A673 (cell line): ENCODE measurements at regions of chr2 and their contacts with region 1.

Region 1: GRCh38 chr2:735670-736582 is 58.7 kb upstream of the TMEM18 start:
- DNase-seq: no peak
- H3K4me3 ChIP-seq: no peak overlapping the region
- H3K27ac ChIP-seq: no peak overlapping the region
- H3K4me1 ChIP-seq: no peaks in the 10 kb centered on the region
- H3K27me3 ChIP-seq: no peaks in the 10 kb centered on the region
- CTCF ChIP-seq: no peak

Region 2: DNA sequence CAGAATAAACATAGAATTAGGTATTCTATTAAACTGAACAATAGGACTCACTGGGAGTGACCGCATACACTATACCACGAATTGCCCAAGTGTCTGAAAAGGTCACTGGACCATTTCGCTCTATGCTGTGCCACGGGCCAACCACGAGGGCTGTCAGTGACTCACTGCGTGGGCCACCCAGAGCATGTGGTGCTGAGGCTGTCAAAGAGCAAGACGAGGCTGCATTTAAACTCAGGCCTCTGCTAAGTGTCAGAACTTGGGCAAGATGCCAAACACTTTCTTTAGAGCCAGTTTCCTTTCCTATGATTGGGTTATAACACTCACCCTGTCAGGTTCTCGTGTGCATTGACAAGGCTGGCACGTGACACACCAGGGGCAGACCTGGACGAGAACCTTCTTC is 569.5 kb before region 1 on chr2:
- CTCF ChIA-PET with region 1: no interaction called
- POLR2A ChIA-PET with region 1: no interaction called
- intact Hi-C with region 1: no loop called
- DNase-seq: peak; percentile 4
- H3K4me3 ChIP-seq: no peak overlapping the region
- H3K27ac ChIP-seq: no peak overlapping the region
- H3K4me1 ChIP-seq: no peaks in the 10 kb centered on the region
- H3K27me3 ChIP-seq: no peaks in the 10 kb centered on the region
- CTCF ChIP-seq: no peak

Region 3: GRCh38 chr2:677056-677965 is 58.6 kb before region 1 on chr2 and contains the start of gene TMEM18:
- CTCF ChIA-PET with region 1: interaction called, 14 read pairs
- POLR2A ChIA-PET with region 1: no interaction called
- intact Hi-C with region 1: loop called (anchors 5 kb)
- DNase-seq: peak; percentile 98
- H3K4me3 ChIP-seq: peak within 1 kb of the TSS; percentile 77
- H3K27ac ChIP-seq: peak within 1 kb of the TSS; percentile 100
- H3K4me1 ChIP-seq: peaks cover 8% of the 10 kb centered on the region
- H3K27me3 ChIP-seq: no peaks in the 10 kb centered on the region
- CTCF ChIP-seq: peak; percentile 33; the same call in 1 of the 2 replicates
- total RNA-seq, gene TMEM18: 25.9 and 29.0 TPM in 2 replicates

Region 4: DNA sequence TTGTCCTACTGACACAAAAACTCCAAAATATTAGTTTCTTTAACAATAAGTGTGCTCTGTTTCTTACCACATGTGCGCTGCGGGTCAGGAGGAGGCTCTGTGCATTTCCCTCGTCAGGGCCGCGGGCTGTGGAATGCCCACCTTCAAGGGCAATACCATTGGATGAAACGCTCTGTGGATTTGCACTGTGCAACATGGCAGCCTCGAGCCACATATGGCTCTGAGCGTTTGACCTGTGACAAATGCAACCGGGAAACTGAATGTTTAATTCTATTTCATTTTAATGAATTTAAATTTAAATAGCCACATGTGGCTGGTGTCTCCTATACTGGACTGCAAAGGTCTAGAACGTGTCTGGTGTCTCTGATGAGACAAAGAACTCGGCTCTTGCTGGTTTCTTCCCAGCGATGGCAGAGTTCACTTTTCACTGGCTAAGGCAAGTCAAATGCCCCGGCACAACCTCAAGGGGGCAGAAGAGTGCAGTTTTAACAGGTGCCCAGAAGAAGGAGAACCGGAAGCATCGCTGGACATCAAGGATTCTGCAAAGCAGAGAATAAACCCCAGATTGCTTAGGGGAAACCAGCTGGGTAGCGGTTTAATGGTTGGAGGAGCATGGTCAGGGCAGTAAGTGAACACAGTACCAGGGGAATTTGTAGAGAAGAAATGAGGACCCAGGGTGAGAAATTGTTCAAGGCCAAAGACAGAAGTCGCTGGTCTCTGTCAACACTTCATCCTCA is 21.8 kb before region 1 on chr2:
- CTCF ChIA-PET with region 1: no interaction called
- POLR2A ChIA-PET with region 1: no interaction called
- intact Hi-C with region 1: no loop called
- DNase-seq: peak; percentile 75
- H3K4me3 ChIP-seq: no peak overlapping the region
- H3K27ac ChIP-seq: no peak overlapping the region
- H3K4me1 ChIP-seq: no peaks in the 10 kb centered on the region
- H3K27me3 ChIP-seq: no peaks in the 10 kb centered on the region
- CTCF ChIP-seq: peak; percentile 86

Region 5: DNA sequence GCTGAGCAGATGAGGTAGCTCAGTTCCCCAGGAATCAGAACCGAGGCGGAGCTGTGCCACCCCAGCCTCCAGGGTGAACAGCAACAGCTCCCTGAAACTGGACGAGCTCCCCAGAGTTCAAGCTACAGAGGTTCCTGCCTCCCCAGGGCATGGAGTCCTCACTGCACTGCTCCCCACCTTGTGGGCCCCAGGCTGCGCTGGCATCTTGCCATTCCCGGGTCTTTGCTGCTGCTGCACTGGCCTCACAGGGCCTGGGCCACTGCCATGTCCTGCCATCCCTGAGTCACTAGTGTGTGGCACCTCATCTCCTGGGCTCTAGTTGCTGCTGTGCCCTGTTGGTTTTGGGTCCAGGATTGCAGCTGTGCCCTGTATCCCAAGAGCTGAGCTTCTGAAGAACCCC is 381.6 kb after region 1 on chr2:
- CTCF ChIA-PET with region 1: no interaction called
- POLR2A ChIA-PET with region 1: no interaction called
- intact Hi-C with region 1: no loop called
- DNase-seq: no peak
- H3K4me3 ChIP-seq: no peak overlapping the region
- H3K27ac ChIP-seq: no peak overlapping the region
- H3K4me1 ChIP-seq: no peaks in the 10 kb centered on the region
- H3K27me3 ChIP-seq: no peaks in the 10 kb centered on the region
- CTCF ChIP-seq: no peak

Region 6: GRCh38 chr2:1246239-1246638 is 510.3 kb after region 1 on chr2:
- CTCF ChIA-PET with region 1: no interaction called
- POLR2A ChIA-PET with region 1: interaction called, 10 read pairs
- intact Hi-C with region 1: no loop called
- DNase-seq: no peak
- H3K4me3 ChIP-seq: no peak overlapping the region
- H3K27ac ChIP-seq: no peak overlapping the region
- H3K4me1 ChIP-seq: no peaks in the 10 kb centered on the region
- H3K27me3 ChIP-seq: no peaks in the 10 kb centered on the region
- CTCF ChIP-seq: 0 out of 2 replicates have a peak, but pooled peaks have one; percentile 11